Calu3 (cell line): ENCODE measurements at regions of chr6 and their contacts with region 1.

Region 1: DNA sequence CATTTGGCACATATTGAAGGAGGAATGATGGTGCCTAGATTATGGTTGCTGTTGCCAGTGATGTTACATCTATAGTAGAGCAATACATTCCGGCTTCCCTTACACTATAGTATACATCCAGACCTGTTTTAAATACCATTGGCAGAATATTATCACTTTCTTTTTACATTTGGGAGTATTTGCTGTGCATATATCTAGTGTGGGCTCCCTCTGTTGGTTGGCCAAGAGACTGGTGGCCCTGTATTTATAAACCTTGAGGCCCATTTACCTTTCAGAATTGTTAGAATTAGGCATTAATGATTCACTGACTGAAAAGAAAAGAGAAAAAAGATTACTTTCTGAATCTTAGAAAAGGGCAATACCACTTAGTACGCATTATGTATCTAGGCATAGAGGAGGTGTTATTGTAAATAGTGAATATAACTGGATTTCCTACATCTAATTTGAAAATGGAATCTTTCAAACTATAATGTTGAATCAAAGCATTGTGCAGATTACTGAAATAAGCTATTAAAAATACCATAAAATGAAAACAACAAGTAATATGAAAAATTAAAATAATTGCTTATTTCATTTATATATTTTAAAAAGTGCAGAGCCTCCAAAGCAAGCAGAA is 628.8 kb upstream of the MAN1A1 start:
- DNase-seq: peak; percentile 29
- H3K4me3 Mint-ChIP-seq: no peak overlapping the region
- H3K27ac Mint-ChIP-seq: no peak overlapping the region
- H3K4me1 Mint-ChIP-seq: no peaks in the 10 kb centered on the region
- H3K27me3 Mint-ChIP-seq: no peaks in the 10 kb centered on the region
- CTCF ChIP-seq: peak; percentile 13

Region 2: GRCh38 chr6:119333707-119334295 is 644.6 kb before region 1 on chr6:
- CTCF ChIA-PET with region 1: no interaction called
- intact Hi-C with region 1: loop called (anchors 1 kb)
- DNase-seq: no peak
- H3K4me3 Mint-ChIP-seq: no peak overlapping the region
- H3K27ac Mint-ChIP-seq: no peak overlapping the region
- H3K4me1 Mint-ChIP-seq: no peaks in the 10 kb centered on the region
- H3K27me3 Mint-ChIP-seq: no peaks in the 10 kb centered on the region
- CTCF ChIP-seq: no peak

Region 3: DNA sequence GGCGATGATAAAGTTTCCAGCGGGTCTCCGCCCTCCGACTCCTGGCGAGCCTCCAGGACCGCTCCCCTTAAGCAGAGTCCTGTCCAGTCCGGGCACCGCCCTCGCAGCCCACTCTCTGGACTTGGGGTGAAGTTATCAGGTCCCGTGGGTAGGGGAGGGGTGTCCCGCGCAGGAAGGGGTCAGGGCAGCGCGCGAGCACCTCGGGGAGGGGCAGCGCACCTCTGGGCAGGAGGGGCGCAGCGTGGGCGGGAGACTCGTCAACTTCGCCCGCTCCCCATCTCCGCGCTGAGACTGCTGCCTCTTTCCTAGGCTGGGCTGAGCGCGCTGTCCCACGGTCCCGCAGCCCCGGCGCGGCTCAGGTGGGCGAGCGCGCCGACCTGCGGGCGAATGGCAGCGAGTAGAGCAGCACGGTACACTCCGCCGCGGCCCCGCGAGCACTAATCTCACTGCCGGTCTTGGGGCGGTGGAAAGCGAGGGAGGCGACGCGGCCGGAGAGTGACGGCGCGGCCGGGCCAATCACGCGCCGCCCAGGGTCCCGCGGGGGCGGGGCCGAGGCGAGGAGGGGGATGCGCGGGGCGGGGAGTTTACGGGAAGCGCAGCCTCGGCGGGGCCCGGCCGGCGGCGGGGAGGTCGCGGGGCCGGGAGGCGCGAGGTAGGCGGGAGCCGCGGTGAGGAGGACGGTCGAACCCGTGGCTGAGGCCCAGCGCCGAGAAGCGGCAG is 628.9 kb before region 1 on chr6 and contains the start of gene MAN1A1:
- CTCF ChIA-PET with region 1: no interaction called
- intact Hi-C with region 1: loop called (anchors 1 kb)
- DNase-seq: peak; percentile 85
- H3K4me3 Mint-ChIP-seq: peak within 1 kb of the TSS; percentile 77
- H3K27ac Mint-ChIP-seq: peak within 1 kb of the TSS; percentile 49
- H3K4me1 Mint-ChIP-seq: peaks cover 24% of the 10 kb centered on the region
- H3K27me3 Mint-ChIP-seq: no peaks in the 10 kb centered on the region
- CTCF ChIP-seq: no peak
- total RNA-seq, gene MAN1A1: 13.3 and 13.7 TPM in 2 replicates

Region 4: GRCh38 chr6:120378582-120379220 is 400.3 kb after region 1 on chr6:
- CTCF ChIA-PET with region 1: no interaction called
- intact Hi-C with region 1: loop called (anchors 10 kb)
- DNase-seq: no peak
- H3K4me3 Mint-ChIP-seq: no peak overlapping the region
- H3K27ac Mint-ChIP-seq: no peak overlapping the region
- H3K4me1 Mint-ChIP-seq: peaks cover 5% of the 10 kb centered on the region
- H3K27me3 Mint-ChIP-seq: no peaks in the 10 kb centered on the region
- CTCF ChIP-seq: peak; percentile 55